Gastrocnemius medialis (tissue), 4 donors: ENCODE measurements at regions of chr11 and their contacts with region 1.

Region 1: DNA sequence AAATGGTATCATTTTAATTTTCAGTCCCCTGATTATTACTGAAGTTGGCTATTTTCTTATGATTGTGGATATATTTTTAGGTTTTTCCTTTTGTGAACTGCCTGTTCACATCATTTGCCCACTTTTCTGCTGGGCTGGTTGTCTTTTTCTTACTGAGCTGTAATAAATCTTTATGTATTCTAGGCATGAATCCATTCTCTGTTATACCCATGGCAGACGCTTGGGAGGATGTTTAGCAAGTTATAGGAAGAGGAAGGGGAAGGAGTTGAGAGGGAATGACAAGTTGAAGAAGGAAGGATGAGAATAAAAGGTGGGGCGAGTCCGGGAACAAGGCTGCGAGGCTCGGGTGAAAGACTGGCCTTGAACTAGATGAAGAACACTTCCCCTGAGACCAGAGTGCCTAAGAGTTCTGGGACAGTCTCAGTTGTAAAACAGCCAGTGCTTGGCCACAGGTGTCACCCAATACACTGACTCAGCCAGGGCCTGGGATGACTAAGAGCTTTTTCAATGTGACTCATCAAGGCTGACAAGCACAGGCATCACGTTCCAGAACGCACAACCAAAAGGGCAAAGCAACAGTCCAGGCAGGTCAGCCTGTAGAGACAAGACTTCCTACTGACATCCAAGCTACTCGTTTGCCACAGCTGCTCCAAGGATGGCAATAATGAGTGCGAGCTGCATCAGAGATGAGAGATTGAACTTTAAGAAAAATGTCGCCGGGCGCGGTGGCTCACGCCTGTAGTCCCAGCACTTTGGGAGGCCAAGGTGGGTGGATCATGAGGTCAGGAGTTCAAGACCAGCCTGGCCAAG is 35.2 kb downstream of the LRFN4 start:
- DNase-seq: peak; percentile 92 to 95
- ATAC-seq: peak; percentile 95 to 99
- H3K4me3 ChIP-seq: no peak overlapping the region
- H3K27ac ChIP-seq: peak overlapping the region; percentile 64 to 95 (median 80)
- H3K4me1 ChIP-seq: peaks cover 0 to 47% of the 10 kb centered on the region in 2 donors
- H3K27me3 ChIP-seq: no peaks in the 10 kb centered on the region
- CTCF ChIP-seq: no peak
- POLR2A ChIP-seq: peak in 1 of 2 donors; percentile 25

Region 2: GRCh38 chr11:66459138-66459778 is 432.8 kb before region 1 on chr11:
- in situ Hi-C with region 1: no loop called
- intact Hi-C with region 1: no loop called
- DNase-seq: no peak
- ATAC-seq: no peak
- H3K4me3 ChIP-seq: no peak overlapping the region
- H3K27ac ChIP-seq: no peak overlapping the region
- H3K4me1 ChIP-seq: no peaks in the 10 kb centered on the region
- H3K27me3 ChIP-seq: no peaks in the 10 kb centered on the region
- CTCF ChIP-seq: no peak
- POLR2A ChIP-seq: no peak

Region 3: GRCh38 chr11:66616379-66617154 is 275.5 kb before region 1 on chr11 and contains the start of gene RBM14:
- in situ Hi-C with region 1: no loop called
- intact Hi-C with region 1: no loop called
- DNase-seq: peak; percentile 99 to 100
- ATAC-seq: peak; percentile 97 to 98
- H3K4me3 ChIP-seq: peak within 1 kb of the TSS; percentile 77 to 96 (median 93)
- H3K27ac ChIP-seq: peak within 1 kb of the TSS; percentile 92 to 95 (median 94)
- H3K4me1 ChIP-seq: peaks cover 35 to 43% of the 10 kb centered on the region in 2 donors
- H3K27me3 ChIP-seq: no peaks in the 10 kb centered on the region
- CTCF ChIP-seq: peak in 1 of 5 experiments; percentile 11
- POLR2A ChIP-seq: peak; percentile 97 to 99
- total RNA-seq, gene RBM14: 17.0 to 43.2 (median 29.4) TPM

Region 4: DNA sequence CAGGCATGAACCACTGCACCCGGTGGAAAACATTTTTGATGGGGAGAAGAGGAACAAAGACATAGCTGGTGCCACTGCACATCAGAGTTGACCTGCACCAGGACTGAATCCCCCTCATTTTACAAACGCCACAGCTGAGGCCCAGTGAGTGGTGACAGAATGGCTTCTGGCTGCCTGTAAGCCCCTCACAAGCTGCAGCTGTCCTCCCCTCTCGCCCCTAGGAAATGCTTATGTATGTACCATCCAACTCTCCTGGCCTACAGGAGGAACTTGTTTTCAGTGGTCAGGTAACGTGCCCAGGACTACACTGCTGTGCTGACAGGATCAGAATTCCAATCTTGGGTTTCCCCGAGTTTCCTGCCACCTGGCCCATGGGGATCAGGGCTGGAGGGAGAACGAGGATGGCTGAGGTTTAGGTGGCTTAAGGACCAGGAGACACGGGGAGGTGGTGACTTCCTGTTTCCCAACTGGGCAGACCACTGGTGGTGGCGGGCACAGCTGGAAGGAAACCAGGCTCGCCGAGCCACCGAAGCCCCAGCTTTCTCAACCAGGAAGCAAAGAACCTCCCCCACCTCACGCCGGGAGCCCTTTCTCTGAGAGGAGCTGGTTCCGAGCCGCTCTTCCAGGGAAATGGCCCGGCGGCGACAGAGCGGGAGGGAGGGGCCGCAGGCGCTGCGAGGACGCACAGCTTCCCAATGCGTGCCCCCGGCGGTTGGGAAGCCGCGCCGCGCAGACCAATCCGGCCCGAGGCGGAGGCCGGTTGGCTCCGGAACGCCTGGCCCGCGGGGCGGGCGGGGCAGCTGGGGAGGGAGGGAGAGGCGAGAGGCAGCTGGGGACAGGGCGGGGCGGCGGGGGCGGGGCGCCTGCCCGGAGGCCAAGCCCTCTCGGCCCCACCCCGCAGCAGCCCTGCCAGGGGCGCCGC is 36.2 kb before region 1 on chr11:
- in situ Hi-C with region 1: no loop called
- intact Hi-C with region 1: loop called (anchors 1 kb)
- DNase-seq: peak; percentile 90 to 94
- ATAC-seq: peak; percentile 87 to 88
- H3K4me3 ChIP-seq: peak overlapping the region; percentile 59 to 96 (median 78)
- H3K27ac ChIP-seq: peak overlapping the region; percentile 82 to 97 (median 88)
- H3K4me1 ChIP-seq: peaks cover 8 to 9% of the 10 kb centered on the region in 2 donors
- H3K27me3 ChIP-seq: no peaks in the 10 kb centered on the region
- CTCF ChIP-seq: no peak
- POLR2A ChIP-seq: peak; percentile 62 to 75